ENCODE measurements at regions of chr7 and their contacts with region 1.

Region 1: DNA sequence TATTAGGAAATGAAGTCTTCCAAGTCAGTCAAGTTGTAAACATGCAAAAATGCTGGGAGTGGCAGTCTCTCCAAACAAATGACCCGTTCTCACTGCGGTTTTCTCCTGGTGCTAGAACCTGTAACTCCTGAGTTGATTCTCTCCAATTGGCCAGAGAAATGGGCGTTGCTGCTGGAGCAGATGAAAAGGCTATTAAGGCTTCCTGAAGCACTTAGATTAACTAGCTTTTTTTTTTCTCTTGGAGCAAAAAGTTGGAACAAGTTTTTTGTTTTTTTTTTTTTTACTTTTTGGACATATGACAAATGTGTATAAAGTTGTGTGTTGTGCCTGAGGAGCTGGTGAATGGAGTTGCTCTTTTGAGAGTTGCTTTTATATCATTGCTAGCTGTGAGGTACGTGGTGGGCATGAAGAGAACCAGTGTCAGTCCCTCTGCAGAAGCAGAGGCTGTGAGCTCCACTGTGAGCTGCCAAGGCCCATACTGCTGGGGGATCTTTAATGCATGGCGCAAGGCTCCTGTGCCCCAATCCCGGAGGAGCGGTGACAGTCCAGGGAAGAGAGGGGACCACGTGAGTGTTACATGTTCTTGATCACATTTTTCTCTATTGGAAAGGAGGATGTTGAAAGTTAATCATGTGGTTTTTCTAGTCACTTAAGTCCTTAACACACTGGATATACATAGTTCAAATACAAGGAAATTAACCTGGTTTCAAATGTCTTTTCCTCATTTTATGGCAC is 393.6 kb upstream of the GALNT17 start:
- DNase-seq: no peak
- ATAC-seq: no peak
- H3K4me3 ChIP-seq: no peak overlapping the region
- H3K27ac ChIP-seq: no peak overlapping the region; the same call in 1 of the 2 replicates
- H3K4me1 ChIP-seq: peaks cover 19% of the 10 kb centered on the region; the same call in 1 of the 2 replicates
- H3K27me3 ChIP-seq: no peaks in the 10 kb centered on the region
- CTCF ChIP-seq: no peak
- EP300 ChIP-seq: no peak
- POLR2A ChIP-seq: no peak
- RAD21 ChIP-seq: no peak

Region 2: GRCh38 chr7:70758646-70759045 is 20.3 kb after region 1 on chr7:
- CTCF ChIA-PET with region 1: no interaction called
- POLR2A ChIA-PET with region 1: interaction called, 8 read pairs
- RAD21 ChIA-PET with region 1: interaction called, 5 read pairs
- SMC1A ChIA-PET with region 1: interaction called, 20 read pairs
- in situ Hi-C with region 1: no loop called
- intact Hi-C with region 1: no loop called
- DNase-seq: no peak
- ATAC-seq: no peak
- H3K4me3 ChIP-seq: no peak overlapping the region
- H3K27ac ChIP-seq: peak overlapping the region; percentile 11; the same call in 1 of the 2 replicates
- H3K4me1 ChIP-seq: peaks cover 45% of the 10 kb centered on the region
- H3K27me3 ChIP-seq: no peaks in the 10 kb centered on the region
- CTCF ChIP-seq: no peak
- EP300 ChIP-seq: no peak
- POLR2A ChIP-seq: no peak
- RAD21 ChIP-seq: no peak